ENCODE measurements at regions of chr4 and their contacts with region 1.

Region 1: DNA sequence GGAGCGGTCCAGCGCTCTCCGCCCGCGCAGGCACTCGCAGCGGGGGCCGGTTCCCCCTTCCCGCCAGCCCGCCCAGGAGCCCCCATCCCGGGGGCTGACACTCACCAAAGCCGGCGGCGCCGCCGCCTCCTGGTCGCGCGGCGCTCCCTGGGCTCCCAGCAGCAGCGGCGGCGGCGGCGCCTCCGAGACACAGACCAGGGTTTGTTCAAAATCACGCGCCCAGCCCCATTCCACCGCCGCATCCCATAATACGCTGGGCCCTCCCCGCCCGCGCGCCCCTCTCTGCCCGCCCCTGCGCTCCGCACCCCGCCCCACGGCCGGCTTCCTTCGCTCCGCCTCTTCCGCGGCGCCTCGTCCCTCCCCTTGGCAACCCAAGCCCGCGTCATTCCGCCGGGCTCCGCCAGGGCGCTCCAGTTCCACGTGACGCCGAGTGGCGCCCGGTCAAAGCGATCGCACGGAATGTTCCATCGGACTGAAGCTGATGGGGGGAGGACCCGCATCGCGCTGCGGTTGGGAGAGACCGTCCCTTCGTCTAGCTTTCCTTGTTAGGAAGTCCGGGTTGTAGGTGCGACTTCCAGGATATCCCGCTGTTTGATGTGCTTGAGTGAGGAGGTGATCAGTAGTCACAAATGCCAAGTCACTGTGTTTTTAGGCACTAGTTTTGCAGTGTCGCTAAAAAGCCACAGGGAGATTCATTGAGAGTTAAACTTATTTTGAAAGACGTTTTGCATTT is 2.2 kb upstream of the LIN54 start:
- DNase-seq: peak; percentile 98
- H3K4me3 Mint-ChIP-seq: peak overlapping the region; percentile 95
- H3K27ac Mint-ChIP-seq: peak overlapping the region; percentile 87
- H3K4me1 Mint-ChIP-seq: peaks cover 29% of the 10 kb centered on the region
- H3K27me3 Mint-ChIP-seq: no peaks in the 10 kb centered on the region

Region 2: GRCh38 chr4:82284858-82285805 is 727.7 kb before region 1 on chr4:
- CTCF ChIA-PET with region 1: no interaction called
- intact Hi-C with region 1: loop called (anchors 5 kb)
- DNase-seq: peak; percentile 100
- H3K4me3 Mint-ChIP-seq: peak overlapping the region; percentile 73
- H3K27ac Mint-ChIP-seq: no peak overlapping the region
- H3K4me1 Mint-ChIP-seq: peaks cover 12% of the 10 kb centered on the region
- H3K27me3 Mint-ChIP-seq: no peaks in the 10 kb centered on the region

Region 3: DNA sequence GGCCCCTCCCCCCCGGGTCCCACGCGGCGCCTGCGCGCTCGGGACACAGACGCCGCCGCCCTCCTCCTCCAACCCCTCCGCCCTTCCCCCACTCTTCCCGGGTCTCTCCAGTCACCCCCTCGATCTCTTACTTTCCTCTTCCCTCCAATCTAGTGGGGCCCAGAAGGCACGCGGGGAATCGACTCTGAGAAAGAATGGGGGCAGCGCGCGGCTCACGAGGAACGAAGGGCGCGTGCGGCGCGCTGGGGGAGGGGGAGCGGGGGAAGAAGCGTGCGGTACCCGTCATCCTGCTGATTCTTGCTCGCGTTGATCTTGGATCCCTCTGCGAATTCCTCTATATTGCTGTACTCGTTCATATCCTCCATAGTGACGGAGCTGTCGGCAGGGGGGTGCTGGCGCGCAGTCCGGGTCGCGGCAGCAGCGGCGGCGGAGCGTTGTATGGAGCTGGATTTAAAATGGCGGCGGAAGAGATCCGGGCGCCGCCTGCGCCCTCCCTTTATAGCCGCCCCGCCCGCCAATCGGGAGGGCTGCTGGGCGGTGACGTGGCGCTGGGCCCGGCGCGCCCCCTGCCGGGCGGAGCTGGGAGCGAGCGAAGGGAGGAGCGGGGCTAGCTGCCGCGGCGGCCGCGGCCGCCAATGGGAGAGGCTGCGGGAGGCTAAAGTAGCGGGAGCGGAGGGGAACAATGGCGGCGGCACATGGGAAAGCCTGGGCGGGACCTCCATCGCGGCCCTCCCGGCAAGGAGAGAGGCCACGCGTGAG is 583.7 kb before region 1 on chr4:
- CTCF ChIA-PET with region 1: no interaction called
- intact Hi-C with region 1: loop called (anchors 1 kb)
- DNase-seq: peak; percentile 92
- H3K4me3 Mint-ChIP-seq: peak overlapping the region; percentile 93
- H3K27ac Mint-ChIP-seq: peak overlapping the region; percentile 99
- H3K4me1 Mint-ChIP-seq: peaks cover 64% of the 10 kb centered on the region
- H3K27me3 Mint-ChIP-seq: no peaks in the 10 kb centered on the region

Region 4: DNA sequence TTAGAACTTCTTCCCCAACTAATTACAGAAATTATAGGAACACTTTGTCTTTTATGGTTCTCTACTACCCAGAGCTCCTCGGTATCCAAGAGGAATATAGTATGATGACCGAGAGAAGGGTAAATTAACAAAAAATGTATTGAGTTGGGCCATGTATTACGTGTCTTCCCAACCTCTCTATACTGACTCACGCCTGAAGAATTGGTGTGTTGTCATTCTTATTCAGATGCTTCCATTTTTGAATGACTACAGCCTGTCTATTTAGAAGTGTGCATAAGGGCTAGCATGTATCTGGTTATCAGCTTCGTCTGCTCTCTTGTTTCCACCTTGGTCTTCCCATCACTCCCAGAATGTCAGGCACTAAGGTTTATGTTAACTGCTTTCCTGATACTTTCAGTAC is 189.8 kb before region 1 on chr4:
- CTCF ChIA-PET with region 1: no interaction called
- intact Hi-C with region 1: no loop called
- DNase-seq: no peak
- H3K4me3 Mint-ChIP-seq: no peak overlapping the region
- H3K27ac Mint-ChIP-seq: no peak overlapping the region
- H3K4me1 Mint-ChIP-seq: no peaks in the 10 kb centered on the region
- H3K27me3 Mint-ChIP-seq: no peaks in the 10 kb centered on the region

Region 5: GRCh38 chr4:82890901-82891706 is 121.7 kb before region 1 on chr4 and contains the start of gene SEC31A:
- CTCF ChIA-PET with region 1: no interaction called
- intact Hi-C with region 1: loop called (anchors 1 kb)
- DNase-seq: peak; percentile 98
- H3K4me3 Mint-ChIP-seq: peak within 1 kb of the TSS; percentile 81
- H3K27ac Mint-ChIP-seq: peak within 1 kb of the TSS; percentile 89
- H3K4me1 Mint-ChIP-seq: peaks cover 49% of the 10 kb centered on the region
- H3K27me3 Mint-ChIP-seq: no peaks in the 10 kb centered on the region
- total RNA-seq, gene SEC31A: 85.1 to 85.7 TPM

Region 6: GRCh38 chr4:83054928-83055327 is 42.1 kb after region 1 on chr4:
- CTCF ChIA-PET with region 1: interaction called, 3 read pairs
- intact Hi-C with region 1: loop called (anchors 1 kb)
- DNase-seq: peak; percentile 34
- H3K4me3 Mint-ChIP-seq: no peak overlapping the region
- H3K27ac Mint-ChIP-seq: no peak overlapping the region
- H3K4me1 Mint-ChIP-seq: no peaks in the 10 kb centered on the region
- H3K27me3 Mint-ChIP-seq: no peaks in the 10 kb centered on the region

Region 7: GRCh38 chr4:83348074-83348473 is 335.2 kb after region 1 on chr4:
- CTCF ChIA-PET with region 1: no interaction called
- intact Hi-C with region 1: loop called (anchors 2 kb)
- DNase-seq: no peak
- H3K4me3 Mint-ChIP-seq: no peak overlapping the region
- H3K27ac Mint-ChIP-seq: no peak overlapping the region
- H3K4me1 Mint-ChIP-seq: peaks cover 20% of the 10 kb centered on the region
- H3K27me3 Mint-ChIP-seq: no peaks in the 10 kb centered on the region

Region 8: GRCh38 chr4:83484500-83485461 is 471.9 kb after region 1 on chr4 and contains the start of gene ABRAXAS1:
- CTCF ChIA-PET with region 1: no interaction called
- intact Hi-C with region 1: loop called (anchors 1 kb)
- DNase-seq: peak; percentile 92
- H3K4me3 Mint-ChIP-seq: peak within 1 kb of the TSS; percentile 99
- H3K27ac Mint-ChIP-seq: peak within 1 kb of the TSS; percentile 91
- H3K4me1 Mint-ChIP-seq: peaks cover 19% of the 10 kb centered on the region
- H3K27me3 Mint-ChIP-seq: no peaks in the 10 kb centered on the region
- total RNA-seq, gene ABRAXAS1: 19.7 to 20.9 TPM

Measured in activated naive CD4-positive, alpha-beta T cell treated with anti-CD3 and anti-CD28 coated beads for 36 hours (primary cell).